Heart left ventricle (tissue), 16 donors: ENCODE measurements at regions of chr3 and their contacts with region 1.

Region 1: DNA sequence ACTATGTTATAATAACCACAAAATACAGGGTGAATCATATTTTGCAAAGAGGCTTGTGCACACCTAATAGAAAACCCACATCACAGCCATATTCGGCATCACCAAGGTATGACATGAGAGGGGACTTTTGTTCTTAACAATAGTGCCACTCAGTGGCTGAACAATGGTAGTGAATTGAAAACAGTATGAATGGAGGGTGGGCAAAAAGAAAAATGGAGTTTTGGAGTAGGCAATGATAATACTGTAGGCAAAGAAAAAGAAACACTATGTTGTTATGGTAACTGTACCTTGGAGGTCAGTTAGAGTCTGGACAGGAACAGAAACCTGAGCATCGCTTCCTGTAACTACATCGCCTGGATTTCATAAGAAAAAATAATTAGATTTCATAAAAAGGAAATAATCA is 348.6 kb downstream of the PLCL2 start:
- DNase-seq: no peak
- ATAC-seq: peak; percentile 72 to 84 (median 83)
- H3K4me3 ChIP-seq: no peak overlapping the region
- H3K27ac ChIP-seq: no peak overlapping the region
- H3K4me1 ChIP-seq: peaks cover 0 to 38% (median 11%) of the 10 kb centered on the region in 12 donors
- H3K27me3 ChIP-seq: no peaks in the 10 kb centered on the region
- CTCF ChIP-seq: peak; percentile 54 to 78 (median 72)
- POLR2A ChIP-seq: no peak

Region 2: GRCh38 chr3:16600780-16601539 is 632.4 kb before region 1 on chr3:
- intact Hi-C with region 1: loop called (anchors 1 to 5 kb)
- DNase-seq: peak; percentile 73 to 85 (median 80)
- ATAC-seq: peak; percentile 48 to 76 (median 68)
- H3K4me3 ChIP-seq: peak overlapping the region in 3 of 12 donors; percentile 0 to 19 (median 14)
- H3K27ac ChIP-seq: no peak overlapping the region
- H3K4me1 ChIP-seq: peaks cover 0 to 7% (median 0%) of the 10 kb centered on the region in 12 donors
- H3K27me3 ChIP-seq: no peaks in the 10 kb centered on the region
- CTCF ChIP-seq: peak; percentile 73 to 96 (median 89)
- POLR2A ChIP-seq: no peak

Region 3: DNA sequence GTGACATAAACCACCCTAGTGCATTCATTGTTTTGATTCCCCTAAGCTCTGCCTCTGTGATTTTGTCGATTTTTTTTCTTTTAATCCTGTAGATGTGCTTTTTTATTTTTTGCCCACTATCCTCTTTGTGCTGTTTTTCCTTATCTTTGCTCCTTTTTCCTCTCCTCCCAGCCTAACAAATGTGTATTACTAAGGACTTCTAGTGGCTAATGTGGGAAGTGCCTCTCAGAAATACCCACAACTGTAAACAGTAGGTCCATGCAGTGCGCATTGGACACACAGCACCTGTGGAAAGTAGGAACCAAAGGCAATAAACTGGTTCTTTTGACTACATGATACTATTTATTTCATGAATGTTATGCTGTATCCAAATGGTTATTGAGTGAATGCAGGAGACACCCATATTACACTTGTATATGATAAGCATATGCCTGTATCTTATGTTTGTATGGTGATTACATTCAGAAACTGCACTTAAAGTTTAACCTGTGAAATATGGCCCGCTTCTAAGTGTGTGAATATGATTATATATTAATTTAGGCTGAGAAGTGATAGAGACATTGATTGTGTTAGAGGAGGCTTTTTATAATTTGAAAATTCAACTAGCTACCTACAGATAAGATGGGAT is 200.9 kb before region 1 on chr3:
- intact Hi-C with region 1: loop called in 4 of 10 experiments (anchors 5 to 10 kb)
- DNase-seq: no peak
- ATAC-seq: peak; percentile 51 to 76 (median 66)
- H3K4me3 ChIP-seq: no peak overlapping the region
- H3K27ac ChIP-seq: no peak overlapping the region
- H3K4me1 ChIP-seq: peaks cover 0 to 40% (median 7%) of the 10 kb centered on the region in 12 donors
- H3K27me3 ChIP-seq: no peaks in the 10 kb centered on the region
- CTCF ChIP-seq: peak; percentile 46 to 74 (median 68)
- POLR2A ChIP-seq: no peak

Region 4: DNA sequence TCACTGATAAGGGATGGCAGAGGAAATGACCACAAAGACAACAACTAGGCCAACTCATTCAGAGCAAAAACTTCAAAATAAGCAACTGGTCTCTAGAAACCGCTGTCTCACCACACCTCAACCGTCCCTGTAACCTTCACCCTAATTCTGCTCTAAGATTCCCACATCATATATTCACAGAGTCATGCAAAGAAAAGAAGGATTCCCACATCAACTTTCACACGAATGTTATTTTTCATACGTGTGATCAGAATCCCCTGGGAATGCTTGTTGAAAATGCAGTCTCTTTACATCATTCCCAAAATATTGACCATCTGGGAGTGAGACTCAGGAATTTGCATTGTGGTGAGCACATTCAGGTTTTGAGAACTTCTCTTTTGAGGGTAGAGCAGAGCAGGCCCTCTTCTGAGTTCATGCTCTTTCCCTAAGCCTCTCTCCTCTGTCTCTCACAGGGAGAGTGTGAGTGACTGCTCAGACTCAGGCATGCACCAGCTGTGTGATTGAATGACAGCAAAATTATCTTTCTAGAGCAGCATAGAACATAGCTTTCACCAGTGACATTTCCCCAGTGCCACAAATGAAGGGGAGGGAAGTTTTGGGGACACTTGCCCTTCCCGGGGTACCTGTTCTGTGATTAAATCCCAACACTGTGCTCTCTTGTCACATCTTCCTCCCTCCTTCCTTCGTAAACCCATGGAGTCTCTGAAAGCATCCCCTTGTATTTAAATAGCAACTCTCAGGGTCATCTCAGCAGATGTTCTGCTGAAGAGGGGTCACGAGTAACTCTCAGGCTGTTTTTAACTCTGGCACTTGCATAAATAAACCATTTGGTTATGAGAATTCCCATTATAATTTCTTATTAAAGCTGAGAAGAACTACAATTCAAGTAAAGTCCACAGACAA is 177.8 kb before region 1 on chr3:
- intact Hi-C with region 1: loop called in 1 of 10 experiments (anchors 10 kb)
- DNase-seq: no peak
- ATAC-seq: peak; percentile 46 to 76 (median 61)
- H3K4me3 ChIP-seq: no peak overlapping the region
- H3K27ac ChIP-seq: peak overlapping the region in 11 of 12 donors; percentile 4 to 74 (median 54)
- H3K4me1 ChIP-seq: peaks cover 0 to 42% (median 19%) of the 10 kb centered on the region in 12 donors
- H3K27me3 ChIP-seq: no peaks in the 10 kb centered on the region
- CTCF ChIP-seq: no peak
- POLR2A ChIP-seq: no peak

Region 5: GRCh38 chr3:17195856-17196604 is 37.4 kb before region 1 on chr3:
- intact Hi-C with region 1: loop called in 1 of 10 experiments (anchors 2 kb)
- DNase-seq: no peak
- ATAC-seq: peak in 3 of 4 donors; percentile 44 to 48 (median 45)
- H3K4me3 ChIP-seq: no peak overlapping the region
- H3K27ac ChIP-seq: peak overlapping the region in 1 of 12 donors; percentile 0
- H3K4me1 ChIP-seq: peaks cover 0 to 25% (median 16%) of the 10 kb centered on the region in 12 donors
- H3K27me3 ChIP-seq: no peaks in the 10 kb centered on the region
- CTCF ChIP-seq: peak in 4 of 12 donors; percentile 15 to 42 (median 32)
- POLR2A ChIP-seq: no peak